ENCODE measurements at regions of chr5 and their contacts with region 1.

Region 1: GRCh38 chr5:150449517-150450339 is at the start of gene RPS14:
- H3K4me3 Mint-ChIP-seq: peak within 1 kb of the TSS; percentile 85
- H3K27ac Mint-ChIP-seq: peak within 1 kb of the TSS; percentile 98
- H3K4me1 Mint-ChIP-seq: peaks cover 26% of the 10 kb centered on the region
- H3K27me3 Mint-ChIP-seq: no peaks in the 10 kb centered on the region

Region 2: GRCh38 chr5:150656191-150657132 is 206.7 kb after region 1 on chr5:
- intact Hi-C with region 1: loop called (anchors 10 kb)
- H3K4me3 Mint-ChIP-seq: peak overlapping the region; percentile 74
- H3K27ac Mint-ChIP-seq: no peak overlapping the region
- H3K4me1 Mint-ChIP-seq: peaks cover 8% of the 10 kb centered on the region
- H3K27me3 Mint-ChIP-seq: peaks cover 32% of the 10 kb centered on the region

Region 3: DNA sequence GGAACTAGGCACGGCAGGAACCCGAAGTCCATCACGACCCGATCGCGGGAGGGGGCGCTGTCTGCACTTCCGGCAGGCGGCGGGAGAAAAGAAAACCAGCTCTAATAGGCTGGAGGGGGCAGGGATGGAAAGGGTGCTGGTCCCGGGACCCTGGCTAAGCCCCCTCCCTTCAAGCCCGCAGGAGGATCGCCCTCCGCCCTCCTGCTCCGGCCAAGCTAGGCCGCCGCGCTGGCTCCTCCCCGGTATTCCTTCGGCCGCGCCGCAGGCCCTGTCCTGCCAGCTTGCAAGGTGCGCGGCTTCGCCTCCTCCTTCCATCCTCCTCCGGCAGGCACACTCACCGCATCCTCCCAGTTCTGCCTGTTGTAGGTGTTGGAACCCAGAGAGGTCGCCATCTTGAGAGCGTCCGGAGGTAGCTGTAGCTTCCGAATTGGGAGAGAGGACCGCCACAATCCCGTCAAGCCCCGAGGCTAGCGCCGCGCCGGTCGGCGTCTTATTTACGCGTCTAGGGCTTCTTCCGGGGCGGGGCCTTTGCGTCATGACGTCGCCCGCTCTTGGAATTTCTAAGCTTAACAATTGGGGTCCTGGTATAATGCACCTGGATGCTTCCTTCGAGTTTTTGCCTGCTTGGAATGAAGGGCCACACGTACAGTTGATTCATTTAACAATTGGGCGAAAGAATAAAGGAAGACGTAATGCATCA is 251.0 kb after region 1 on chr5 and contains the start of gene RBM22:
- intact Hi-C with region 1: loop called (anchors 10 kb)
- H3K4me3 Mint-ChIP-seq: no peak within 1 kb of the TSS
- H3K27ac Mint-ChIP-seq: no peak within 1 kb of the TSS
- H3K4me1 Mint-ChIP-seq: no peaks in the 10 kb centered on the region
- H3K27me3 Mint-ChIP-seq: no peaks in the 10 kb centered on the region